ENCODE measurements at regions of chr2 and their contacts with region 1.

Region 1: GRCh38 chr2:9799665-9800632 is 43.3 kb upstream of the TAF1B start:
- DNase-seq: peak; percentile 81

Region 2: DNA sequence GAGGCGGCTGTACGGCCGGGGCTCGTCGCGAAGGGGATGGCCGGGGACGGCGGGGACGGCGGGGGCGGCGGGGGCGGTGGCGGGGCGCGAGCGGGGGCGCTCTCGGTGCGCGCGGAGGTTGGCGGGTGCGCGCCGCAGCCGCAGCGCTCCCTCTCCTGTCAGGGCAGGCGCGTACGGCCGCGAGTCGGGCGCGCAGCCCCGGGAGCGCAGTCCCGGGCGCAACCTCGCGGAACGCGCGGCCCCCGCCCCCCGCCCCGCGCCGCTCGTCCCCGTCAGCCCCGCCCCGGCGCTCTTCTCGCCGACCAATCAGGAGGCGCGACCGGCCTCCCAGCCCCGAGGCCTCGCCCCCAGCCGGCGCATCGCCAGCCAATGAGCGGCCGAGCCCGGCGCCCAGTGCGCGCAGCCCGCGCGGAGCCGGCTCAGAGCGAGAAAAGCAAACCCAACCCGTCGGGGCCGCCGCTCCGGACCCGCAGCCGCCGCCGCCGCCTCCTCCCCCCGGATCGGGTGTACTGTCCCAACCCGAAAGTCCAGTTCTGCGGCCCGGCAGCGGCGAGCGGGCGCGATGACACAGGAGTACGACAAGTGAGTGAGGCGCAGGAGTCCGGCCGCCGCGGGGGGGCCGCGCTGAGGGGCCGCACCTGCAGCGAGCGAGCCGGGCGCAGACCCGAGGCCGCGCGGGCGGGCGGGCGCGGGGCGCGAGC is 151.5 kb after region 1 on chr2 and contains the start of gene GRHL1:
- in situ Hi-C with region 1: loop called (anchors 25 kb)
- DNase-seq: peak; percentile 91
- total RNA-seq, gene GRHL1: 0.14 and 0.98 TPM in 2 replicates